ENCODE measurements at regions of chr15 and their contacts with region 1.

Region 1: GRCh38 chr15:45027220-45027619 is 4.2 kb downstream of the SORD start:
- DNase-seq: no peak
- H3K4me3 ChIP-seq: no peak overlapping the region
- H3K27ac ChIP-seq: no peak overlapping the region
- H3K4me1 ChIP-seq: peaks cover 19% of the 10 kb centered on the region
- CTCF ChIP-seq: no peak

Region 2: GRCh38 chr15:44570361-44570760 is 456.9 kb before region 1 on chr15:
- CTCF ChIA-PET with region 1: no interaction called
- POLR2A ChIA-PET with region 1: no interaction called
- intact Hi-C with region 1: loop called (anchors 5 kb)
- DNase-seq: no peak
- H3K4me3 ChIP-seq: no peak overlapping the region
- H3K27ac ChIP-seq: no peak overlapping the region
- H3K4me1 ChIP-seq: no peaks in the 10 kb centered on the region
- CTCF ChIP-seq: no peak

Region 3: DNA sequence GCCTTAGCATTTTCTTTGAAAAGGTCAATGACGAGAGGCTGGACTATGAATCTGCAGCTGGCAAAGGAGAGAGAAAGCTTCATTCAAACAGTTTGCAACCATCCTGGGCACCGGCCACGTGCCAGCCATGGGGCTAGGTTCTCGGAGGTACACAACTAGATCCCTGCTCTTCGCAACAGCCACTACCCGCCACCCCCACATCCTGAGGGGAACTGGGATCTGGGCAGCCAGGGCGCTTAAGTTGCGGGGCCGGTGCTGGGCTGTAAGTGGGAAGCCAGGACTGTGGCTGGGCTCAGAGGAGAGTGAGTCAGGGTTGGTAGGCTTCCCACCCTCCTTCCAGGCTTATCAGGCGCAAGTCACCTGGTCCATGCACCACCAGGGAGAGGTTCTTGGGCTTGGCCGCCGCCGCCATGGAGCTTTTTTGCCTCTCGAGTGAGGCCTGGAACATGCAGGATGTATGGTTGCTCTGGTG is 165.7 kb before region 1 on chr15:
- CTCF ChIA-PET with region 1: no interaction called
- POLR2A ChIA-PET with region 1: no interaction called
- intact Hi-C with region 1: loop called (anchors 5 kb)
- DNase-seq: no peak
- H3K4me3 ChIP-seq: no peak overlapping the region
- H3K27ac ChIP-seq: no peak overlapping the region
- H3K4me1 ChIP-seq: no peaks in the 10 kb centered on the region
- CTCF ChIP-seq: no peak

Measured in OCI-LY7 (cell line).